A549 (cell line): ENCODE measurements at regions of chr20 and their contacts with region 1.

Region 1: GRCh38 chr20:492159-492558 is 29.8 kb upstream of the TBC1D20 start:
- DNase-seq: no peak
- ATAC-seq: no peak
- H3K4me3 ChIP-seq: no peak overlapping the region
- H3K27ac ChIP-seq: no peak overlapping the region
- H3K4me1 ChIP-seq: peaks cover 11% of the 10 kb centered on the region; the same call in 2 of the 3 replicates
- CTCF ChIP-seq: no peak
- EP300 ChIP-seq: no peak
- POLR2A ChIP-seq: no peak
- RAD21 ChIP-seq: no peak

Region 2: DNA sequence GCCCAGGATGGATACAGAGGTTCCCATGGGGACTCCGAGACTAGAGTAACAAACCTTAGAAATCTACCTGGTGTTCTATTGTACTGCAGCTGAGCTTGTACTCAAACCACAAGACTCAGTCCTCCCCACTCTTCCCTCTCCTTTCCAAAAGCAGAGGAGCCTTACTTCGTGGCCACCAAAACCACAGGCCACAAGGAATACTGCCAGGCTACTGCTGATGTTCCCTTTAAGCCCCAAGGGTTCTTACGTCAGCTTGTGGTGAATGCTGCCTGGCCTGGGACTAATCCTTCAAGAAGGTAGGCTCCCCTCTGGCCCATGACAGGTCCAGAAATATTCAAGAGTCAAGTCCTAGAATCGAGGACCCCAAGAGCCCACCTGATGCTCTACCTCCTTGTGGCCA is 292.2 kb before region 1 on chr20:
- CTCF ChIA-PET with region 1: no interaction called
- POLR2A ChIA-PET with region 1: no interaction called
- DNase-seq: no peak
- ATAC-seq: no peak
- H3K4me3 ChIP-seq: no peak overlapping the region
- H3K27ac ChIP-seq: no peak overlapping the region
- H3K4me1 ChIP-seq: no peaks in the 10 kb centered on the region
- CTCF ChIP-seq: no peak
- EP300 ChIP-seq: no peak
- POLR2A ChIP-seq: no peak
- RAD21 ChIP-seq: no peak

Region 3: GRCh38 chr20:478949-479429 is 13.2 kb before region 1 on chr20:
- CTCF ChIA-PET with region 1: interaction called, 24 read pairs
- POLR2A ChIA-PET with region 1: no interaction called
- DNase-seq: peak; percentile 71 to 76
- ATAC-seq: peak; percentile 73 to 81
- H3K4me3 ChIP-seq: no peak overlapping the region
- H3K27ac ChIP-seq: peak overlapping the region in 1 of 2 experiments; percentile 43; a peak in 2 of 6 replicates
- H3K4me1 ChIP-seq: peaks cover 10% of the 10 kb centered on the region; the same call in 2 of the 3 replicates
- CTCF ChIP-seq: peak; percentile 86
- EP300 ChIP-seq: no peak
- POLR2A ChIP-seq: no peak
- RAD21 ChIP-seq: peak; percentile 70 to 71